ENCODE measurements at regions of chr10 and their contacts with region 1.

Region 1: DNA sequence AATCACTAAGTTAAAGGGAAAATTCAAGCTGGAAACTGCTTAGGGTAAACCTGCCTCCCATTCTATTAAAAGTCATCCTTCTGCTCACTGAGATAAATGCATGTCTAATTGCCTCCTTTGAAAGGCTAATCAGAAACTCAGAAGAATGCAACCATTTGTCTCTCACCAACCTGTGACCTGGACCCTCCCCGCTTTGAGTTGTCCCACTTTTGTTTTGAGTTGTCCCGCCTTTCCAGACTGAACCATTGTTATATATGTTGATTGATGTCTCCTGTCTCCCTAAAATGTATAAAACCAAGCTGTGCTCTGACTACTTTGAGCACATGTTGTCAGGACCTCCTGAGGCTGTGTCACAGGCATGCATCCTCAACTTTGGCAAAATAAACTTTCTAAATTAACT is 378.4 kb downstream of the KIF20B start:
- DNase-seq: no peak

Region 2: DNA sequence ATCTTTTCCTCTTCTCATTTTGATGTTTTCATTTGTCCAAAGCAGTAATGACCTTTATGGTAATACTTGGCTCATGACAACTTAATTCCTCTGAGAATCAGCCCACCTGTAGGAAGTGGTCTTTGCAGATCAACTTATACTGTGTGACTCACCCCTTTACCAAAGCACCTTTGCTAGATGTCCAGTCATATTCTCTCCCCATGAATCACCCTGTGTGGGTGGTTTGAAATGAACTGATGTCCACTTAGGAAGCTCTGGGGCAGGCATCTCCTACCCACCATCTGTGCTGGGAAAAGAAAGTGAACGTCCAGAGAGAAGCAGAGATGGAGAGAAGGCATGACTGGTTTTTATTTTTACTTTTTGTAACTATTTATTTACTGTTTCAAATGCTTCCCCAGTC is 31.9 kb after region 1 on chr10:
- intact Hi-C with region 1: loop called in 1 of 2 experiments (anchors 2 kb)
- DNase-seq: no peak

Measured in posterior vena cava (tissue), 2 donors.